ENCODE measurements at regions of chr15 and their contacts with region 1.

Region 1: GRCh38 chr15:78872972-78873792 is 492 bp downstream of the MORF4L1 start:
- DNase-seq: peak; percentile 96
- ATAC-seq: peak; percentile 80
- H3K4me3 Mint-ChIP-seq: peak overlapping the region; percentile 99
- H3K27ac Mint-ChIP-seq: peak overlapping the region; percentile 99
- H3K4me1 Mint-ChIP-seq: peaks cover 34% of the 10 kb centered on the region
- H3K27me3 Mint-ChIP-seq: no peaks in the 10 kb centered on the region

Region 2: GRCh38 chr15:78264304-78265136 is 608.7 kb before region 1 on chr15 and contains the start of gene DNAJA4:
- CTCF ChIA-PET with region 1: no interaction called
- POLR2A ChIA-PET with region 1: no interaction called
- intact Hi-C with region 1: loop called in 1 of 2 experiments (anchors 1 kb)
- DNase-seq: peak; percentile 74
- ATAC-seq: peak; percentile 66
- H3K4me3 Mint-ChIP-seq: peak within 1 kb of the TSS; percentile 83
- H3K27ac Mint-ChIP-seq: peak within 1 kb of the TSS; percentile 86
- H3K4me1 Mint-ChIP-seq: peaks cover 29% of the 10 kb centered on the region
- H3K27me3 Mint-ChIP-seq: no peaks in the 10 kb centered on the region
- total RNA-seq, gene DNAJA4: 38.6 to 41.5 TPM

Region 3: DNA sequence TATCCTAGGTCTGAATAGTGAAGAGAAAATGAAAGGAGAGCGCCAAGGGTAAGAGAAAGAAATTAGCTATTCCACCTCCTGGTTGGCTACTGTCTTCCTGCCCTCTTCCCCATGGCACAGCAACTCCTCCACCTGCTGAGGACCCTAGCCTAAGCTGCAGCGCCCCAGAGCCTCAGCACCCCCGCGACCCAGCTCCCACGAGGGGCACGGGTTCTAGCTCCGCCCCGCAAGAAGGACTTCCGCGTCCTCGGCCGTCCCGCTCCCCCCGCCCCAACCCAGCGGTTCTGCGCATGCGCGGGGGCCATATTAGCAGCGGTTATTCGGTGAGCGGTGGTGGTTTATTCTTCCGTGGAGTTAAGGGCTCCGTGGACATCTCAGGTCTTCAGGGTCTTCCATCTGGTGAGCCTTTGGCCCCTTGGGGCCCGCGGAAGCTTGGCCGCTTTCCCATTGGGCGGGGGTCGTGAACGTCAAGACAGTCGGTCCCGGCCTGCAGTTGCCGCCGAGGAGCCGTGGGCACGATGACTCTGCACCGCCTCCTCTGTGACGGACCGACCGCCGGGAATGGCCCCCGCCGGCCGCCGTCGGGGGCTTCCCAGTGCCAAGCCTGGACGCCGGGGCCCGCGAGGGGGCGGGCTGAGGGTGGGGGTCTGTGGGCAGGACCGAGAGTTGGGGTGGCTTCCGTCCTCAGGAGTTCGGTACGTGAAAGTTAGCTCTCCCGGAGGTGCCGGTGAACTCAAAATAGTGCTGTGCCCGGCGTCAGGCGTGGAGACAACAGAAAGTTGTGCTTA is 332.8 kb before region 1 on chr15 and contains the start of gene PSMA4:
- CTCF ChIA-PET with region 1: no interaction called
- POLR2A ChIA-PET with region 1: interaction called, 3 read pairs
- intact Hi-C with region 1: loop called in 1 of 2 experiments (anchors 1 kb)
- DNase-seq: peak; percentile 96
- ATAC-seq: peak; percentile 86
- H3K4me3 Mint-ChIP-seq: peak within 1 kb of the TSS; percentile 91
- H3K27ac Mint-ChIP-seq: peak within 1 kb of the TSS; percentile 98
- H3K4me1 Mint-ChIP-seq: peaks cover 27% of the 10 kb centered on the region
- H3K27me3 Mint-ChIP-seq: no peaks in the 10 kb centered on the region
- total RNA-seq, gene PSMA4: 273 to 312 TPM

Region 4: GRCh38 chr15:78859971-78860732 is 13.0 kb before region 1 on chr15:
- CTCF ChIA-PET with region 1: interaction called, 20 read pairs
- POLR2A ChIA-PET with region 1: interaction called, 5 read pairs
- intact Hi-C with region 1: loop called (anchors 1 kb)
- DNase-seq: peak; percentile 88
- ATAC-seq: peak; percentile 79
- H3K4me3 Mint-ChIP-seq: peak overlapping the region; percentile 77
- H3K27ac Mint-ChIP-seq: peak overlapping the region; percentile 78
- H3K4me1 Mint-ChIP-seq: peaks cover 8% of the 10 kb centered on the region
- H3K27me3 Mint-ChIP-seq: no peaks in the 10 kb centered on the region

Region 5: GRCh38 chr15:79923515-79924395 is 1050.6 kb after region 1 on chr15:
- CTCF ChIA-PET with region 1: no interaction called
- POLR2A ChIA-PET with region 1: no interaction called
- intact Hi-C with region 1: loop called in 1 of 2 experiments (anchors 2 kb)
- DNase-seq: peak; percentile 99
- ATAC-seq: peak; percentile 94
- H3K4me3 Mint-ChIP-seq: peak overlapping the region; percentile 89
- H3K27ac Mint-ChIP-seq: peak overlapping the region; percentile 94
- H3K4me1 Mint-ChIP-seq: peaks cover 23% of the 10 kb centered on the region
- H3K27me3 Mint-ChIP-seq: no peaks in the 10 kb centered on the region

Measured in activated CD4-positive, alpha-beta T cell treated with anti-CD3 and anti-CD28 coated beads for 36 hours (primary cell).